Left colon (tissue), 2 donors: ENCODE measurements at regions of chr1 and their contacts with region 1.

Region 1: GRCh38 chr1:150176593-150176992 is 26.9 kb downstream of the PLEKHO1 start:
- DNase-seq: no peak
- ATAC-seq: no peak

Region 2: DNA sequence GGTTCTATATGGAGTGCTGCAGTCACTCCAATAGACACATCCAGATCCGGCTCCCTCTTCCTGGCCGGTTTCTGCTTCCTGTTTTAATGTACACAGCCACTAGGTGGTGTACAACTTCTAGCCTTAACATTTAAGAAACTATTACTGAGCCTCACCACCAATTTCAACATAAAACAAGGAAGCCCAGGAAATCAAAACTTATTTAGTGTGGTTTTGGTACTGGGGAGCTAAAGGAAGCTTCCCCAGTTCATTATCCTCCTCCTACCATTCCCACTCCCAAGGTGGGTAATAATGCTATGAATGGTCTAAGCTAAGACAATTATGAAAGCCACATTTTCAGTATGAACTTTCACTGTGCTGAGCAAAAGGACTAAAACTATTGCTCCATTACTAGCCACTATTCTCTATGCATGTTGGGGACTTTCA is 214.5 kb before region 1 on chr1:
- intact Hi-C with region 1: loop called in 1 of 2 experiments (anchors 5 kb)
- DNase-seq: peak in 1 of 2 donors; percentile 31
- ATAC-seq: peak; percentile 95

Region 3: GRCh38 chr1:150387200-150387599 is 210.6 kb after region 1 on chr1:
- intact Hi-C with region 1: no loop called
- DNase-seq: no peak
- ATAC-seq: peak; percentile 74